GM18951 (cell line): ENCODE measurements at regions of chr4 and their contacts with region 1.

Region 1: DNA sequence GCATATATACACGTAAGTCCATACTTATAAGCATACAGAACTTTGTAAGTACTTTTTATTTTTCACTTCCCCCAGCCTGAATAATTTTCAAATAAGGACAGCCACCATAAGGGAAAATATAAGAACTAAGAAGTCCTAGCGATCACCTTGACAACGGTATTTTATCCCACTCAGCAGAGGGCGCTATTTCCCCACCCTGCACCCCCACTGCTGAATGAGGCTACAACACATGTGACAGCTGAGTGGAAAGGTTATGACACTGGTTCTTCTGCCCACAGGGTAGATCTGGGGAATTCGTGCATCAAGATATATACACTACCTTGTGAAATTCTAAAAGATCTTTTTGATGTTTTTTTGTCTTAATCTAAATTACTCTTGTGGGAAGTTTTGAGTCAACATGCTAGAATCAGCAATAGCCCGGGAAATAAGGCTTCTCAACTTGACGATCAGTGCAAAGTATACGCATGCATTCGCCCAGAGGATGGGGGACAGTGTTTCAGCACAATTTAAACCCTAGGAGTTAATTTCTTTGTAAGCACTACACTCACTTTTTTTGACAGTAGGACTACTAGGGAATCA is 151.5 kb downstream of the CORIN start:
- POLR2A ChIP-seq: no peak

Region 2: DNA sequence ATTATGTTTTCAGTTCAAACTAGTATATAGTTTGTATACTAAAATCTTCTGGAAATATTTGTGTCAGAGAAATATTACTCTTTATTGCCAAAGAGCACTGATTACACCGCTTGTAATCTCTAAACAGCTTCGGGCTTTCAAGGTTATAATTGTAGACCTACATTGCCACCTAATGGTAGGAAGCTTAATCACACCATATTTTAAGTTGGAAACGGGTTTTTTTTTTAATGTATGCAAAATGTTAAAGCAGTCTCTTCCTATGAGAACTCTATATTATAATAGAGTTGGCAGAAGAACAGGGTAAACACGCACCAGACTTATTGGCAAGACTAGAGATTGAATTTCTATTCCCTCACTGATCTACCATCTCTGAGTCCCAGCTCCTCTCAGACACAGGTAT is 247.5 kb after region 1 on chr4:
- in situ Hi-C with region 1: loop called (anchors 10 kb)
- POLR2A ChIP-seq: no peak

Region 3: DNA sequence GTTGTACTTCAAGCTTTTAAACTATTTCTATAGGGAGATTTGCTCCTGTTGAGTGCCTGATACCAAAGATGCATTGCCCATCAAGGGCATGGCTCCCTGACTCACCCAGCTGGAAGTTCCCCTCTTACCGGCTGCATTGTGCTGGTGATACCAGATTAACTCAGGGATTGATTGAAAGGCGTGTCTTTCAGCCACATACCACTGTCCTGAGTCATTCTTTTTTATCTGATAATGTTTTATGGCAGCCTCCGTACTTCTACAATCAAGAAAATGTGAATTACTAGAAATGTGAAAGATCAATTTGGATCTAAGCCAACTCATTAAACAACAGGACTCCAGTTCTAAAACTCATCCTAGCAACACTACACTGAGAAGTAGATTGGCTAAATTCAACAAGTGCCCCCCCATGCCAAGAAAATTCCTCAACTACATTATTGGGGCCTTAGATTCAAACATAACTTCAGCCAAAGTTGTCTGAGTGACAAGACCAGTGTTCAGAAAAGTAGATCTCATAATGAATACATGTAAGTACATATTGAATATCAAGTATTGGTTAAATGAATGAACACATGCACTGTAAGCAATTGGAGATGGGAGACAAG is 407.7 kb after region 1 on chr4:
- in situ Hi-C with region 1: loop called (anchors 25 kb)
- POLR2A ChIP-seq: no peak